BJ (cell line): ENCODE measurements at regions of chr10 and their contacts with region 1.

Region 1: GRCh38 chr10:112375721-112376395 is 1.9 kb downstream of the ACSL5 start:
- DNase-seq: no peak
- H3K4me3 ChIP-seq: no peak overlapping the region
- H3K27me3 ChIP-seq: no peaks in the 10 kb centered on the region
- CTCF ChIP-seq: no peak

Region 2: DNA sequence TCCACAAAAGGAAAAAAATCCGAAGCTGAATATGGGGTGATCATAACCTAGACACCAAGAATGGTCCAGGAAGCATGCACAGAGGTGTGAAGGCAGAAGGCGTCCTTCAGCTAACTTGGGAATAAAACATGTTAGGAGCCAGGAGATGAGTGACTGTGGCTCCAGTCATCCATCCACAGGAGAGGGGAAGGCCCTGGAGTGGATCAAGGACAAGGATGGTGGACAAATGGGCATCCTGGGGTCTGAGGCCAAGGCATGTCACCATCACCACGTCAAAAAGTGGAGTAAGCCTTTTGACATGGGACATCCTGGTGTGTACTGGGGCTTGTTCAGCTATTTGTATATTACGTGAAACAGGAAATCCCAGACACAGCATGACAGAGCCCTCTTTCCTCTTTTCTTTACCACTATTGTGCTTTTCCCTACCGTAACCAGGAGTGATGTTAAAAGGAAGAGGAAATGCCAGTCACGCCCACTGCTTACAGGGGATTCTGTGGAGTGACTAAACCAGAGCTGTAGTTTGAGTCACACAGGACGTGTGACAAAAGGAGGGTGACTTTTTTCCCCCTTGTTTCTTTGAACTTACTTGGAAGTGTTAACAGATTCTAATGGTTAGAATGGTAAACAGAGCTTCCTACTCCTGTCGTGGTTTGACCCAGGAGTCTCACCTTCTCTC is 13.4 kb after region 1 on chr10:
- CTCF ChIA-PET with region 1: interaction called, 10 read pairs
- POLR2A ChIA-PET with region 1: no interaction called
- DNase-seq: peak; percentile 18
- H3K4me3 ChIP-seq: no peak overlapping the region
- H3K27me3 ChIP-seq: no peaks in the 10 kb centered on the region
- CTCF ChIP-seq: no peak